ENCODE measurements at regions of chr3 and their contacts with region 1.

Region 1: GRCh38 chr3:52446631-52447511 is 2.0 kb upstream of the SEMA3G start:
- DNase-seq: peak; percentile 77
- ATAC-seq: peak; percentile 27

Region 2: GRCh38 chr3:51982782-51983577 is 463.9 kb before region 1 on chr3 and contains the start of gene ACY1:
- intact Hi-C with region 1: no loop called
- DNase-seq: peak; percentile 94
- ATAC-seq: peak; percentile 94
- total RNA-seq, gene ACY1: 23.2 TPM

Region 3: DNA sequence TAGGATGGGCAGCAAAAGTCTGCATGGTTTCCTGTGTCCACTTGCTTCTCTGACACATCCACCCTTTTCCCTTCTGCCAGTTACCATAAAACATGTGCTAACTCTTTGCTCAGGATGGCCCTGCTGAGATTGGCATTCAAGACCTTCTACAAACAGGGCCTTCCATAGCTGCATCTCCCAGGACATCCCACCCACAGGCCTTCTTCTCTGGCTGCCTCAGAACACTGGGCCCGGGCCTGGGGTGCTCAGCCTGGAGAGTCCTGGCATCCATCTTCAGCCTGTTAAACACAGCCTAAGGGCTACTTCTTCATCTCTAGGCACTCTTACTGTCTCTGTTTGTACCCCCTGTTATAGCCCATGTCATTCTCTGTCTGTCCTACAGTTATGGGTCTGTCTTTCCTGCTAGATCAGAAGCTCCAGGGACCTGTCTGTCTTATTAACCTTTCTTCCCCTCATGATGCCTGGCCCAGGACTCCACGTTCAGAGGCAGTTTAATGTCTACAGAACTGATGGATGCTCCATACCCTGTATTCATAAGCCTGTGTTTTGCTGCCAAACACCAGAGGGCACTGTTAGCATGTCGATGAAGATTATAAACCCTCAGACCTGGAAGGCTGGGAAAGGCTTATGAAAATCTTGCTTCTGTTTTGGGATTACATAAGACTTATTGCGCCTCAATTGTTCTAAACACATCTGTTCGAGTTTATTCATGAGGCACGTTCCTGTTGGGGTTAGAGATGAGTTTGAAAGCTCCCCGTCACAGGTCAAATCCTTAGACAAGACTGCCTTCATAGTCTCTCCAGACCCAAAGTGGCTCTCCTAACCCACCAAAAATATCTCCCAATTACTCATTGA is 18.5 kb before region 1 on chr3:
- intact Hi-C with region 1: loop called (anchors 2 kb)
- DNase-seq: no peak
- ATAC-seq: peak; percentile 87